ENCODE measurements at regions of chr1 and their contacts with region 1.

Region 1: GRCh38 chr1:221961532-221962292 is 219.8 kb upstream of the DUSP10 start:
- DNase-seq: no peak
- H3K4me3 ChIP-seq: no peak overlapping the region
- H3K27ac ChIP-seq: no peak overlapping the region
- H3K4me1 ChIP-seq: peaks cover 0 to 13% (median 2%) of the 10 kb centered on the region in 4 donors
- H3K27me3 ChIP-seq: no peaks in the 10 kb centered on the region
- CTCF ChIP-seq: no peak

Region 2: GRCh38 chr1:221543529-221544120 is 418.1 kb before region 1 on chr1:
- intact Hi-C with region 1: loop called (anchors 5 kb)
- DNase-seq: no peak
- H3K4me3 ChIP-seq: no peak overlapping the region
- H3K27ac ChIP-seq: no peak overlapping the region
- H3K4me1 ChIP-seq: no peaks in the 10 kb centered on the region
- H3K27me3 ChIP-seq: no peaks in the 10 kb centered on the region
- CTCF ChIP-seq: peak; percentile 40 to 42